Right ventricle myocardium inferior (tissue), 1 donor: ENCODE measurements at regions of chr6 and their contacts with region 1.

Region 1: GRCh38 chr6:99151634-99152344 is 197.7 kb downstream of the FAXC start:
- DNase-seq: no peak
- ATAC-seq: no peak

Region 2: DNA sequence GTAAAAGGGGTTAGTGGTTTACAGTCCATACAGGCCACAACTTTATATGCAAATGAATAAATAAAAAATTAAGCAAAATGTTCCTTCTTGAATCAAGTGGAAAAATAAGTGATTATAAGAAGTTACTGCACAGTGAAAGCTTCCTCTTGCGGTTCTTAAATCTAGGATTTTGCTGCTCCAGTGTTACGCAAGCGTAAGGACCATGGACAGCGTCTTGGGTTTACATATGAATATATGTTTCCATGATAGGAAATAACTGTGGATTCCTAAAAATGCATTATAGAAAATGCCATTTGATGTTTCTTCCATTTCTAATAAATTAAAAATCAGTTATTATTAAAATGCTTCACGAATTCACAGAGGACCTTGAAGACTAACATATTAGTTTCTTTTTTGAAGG is 494.0 kb before region 1 on chr6:
- intact Hi-C with region 1: no loop called
- DNase-seq: no peak
- ATAC-seq: no peak

Region 3: DNA sequence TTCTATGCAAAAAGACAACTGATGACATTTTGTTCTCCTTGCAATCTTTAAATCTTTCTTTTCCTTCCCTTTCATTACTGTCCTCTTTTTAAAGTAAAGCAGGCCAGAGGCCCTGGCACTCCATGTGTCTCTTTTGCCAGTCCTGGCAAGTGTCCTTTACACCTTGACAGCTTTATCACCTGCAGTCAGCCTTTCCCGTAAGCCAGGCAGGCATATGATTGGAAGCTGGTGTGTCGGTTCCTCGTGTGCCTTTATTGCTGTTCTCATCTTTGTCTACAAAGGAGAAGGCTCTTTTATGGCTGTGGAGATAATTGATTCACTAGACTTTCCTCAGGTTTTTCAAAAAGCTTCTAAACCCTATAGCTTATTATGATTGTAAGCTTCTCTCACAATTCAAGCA is 41.8 kb before region 1 on chr6:
- intact Hi-C with region 1: no loop called
- DNase-seq: no peak
- ATAC-seq: no peak

Region 4: GRCh38 chr6:99241905-99242534 is 90.2 kb after region 1 on chr6:
- intact Hi-C with region 1: loop called (anchors 2 kb)
- DNase-seq: no peak
- ATAC-seq: no peak

Region 5: DNA sequence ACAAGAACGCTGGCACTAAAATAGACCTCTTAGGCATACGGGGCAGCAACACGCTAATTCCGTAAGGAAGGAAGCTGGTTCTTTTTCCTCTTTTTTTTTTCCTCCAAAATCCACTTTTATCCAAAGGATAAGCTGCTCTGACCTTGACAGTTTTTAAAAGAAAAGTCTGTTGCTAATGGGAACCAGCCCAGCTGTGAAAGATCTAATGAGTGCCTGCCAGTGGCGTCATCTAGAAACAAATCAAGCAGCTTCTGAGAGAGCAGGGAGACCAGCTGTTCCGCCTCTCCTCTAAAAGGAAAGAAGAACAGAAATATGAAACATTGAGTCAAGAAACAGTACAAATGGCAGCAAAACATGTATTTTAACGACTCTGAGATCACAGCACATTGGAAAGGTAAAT is 119.0 kb after region 1 on chr6:
- intact Hi-C with region 1: no loop called
- DNase-seq: no peak
- ATAC-seq: no peak